Posterior cingulate gyrus (tissue), 11 donors: ENCODE measurements at regions of chr11 and their contacts with region 1.

Region 1: DNA sequence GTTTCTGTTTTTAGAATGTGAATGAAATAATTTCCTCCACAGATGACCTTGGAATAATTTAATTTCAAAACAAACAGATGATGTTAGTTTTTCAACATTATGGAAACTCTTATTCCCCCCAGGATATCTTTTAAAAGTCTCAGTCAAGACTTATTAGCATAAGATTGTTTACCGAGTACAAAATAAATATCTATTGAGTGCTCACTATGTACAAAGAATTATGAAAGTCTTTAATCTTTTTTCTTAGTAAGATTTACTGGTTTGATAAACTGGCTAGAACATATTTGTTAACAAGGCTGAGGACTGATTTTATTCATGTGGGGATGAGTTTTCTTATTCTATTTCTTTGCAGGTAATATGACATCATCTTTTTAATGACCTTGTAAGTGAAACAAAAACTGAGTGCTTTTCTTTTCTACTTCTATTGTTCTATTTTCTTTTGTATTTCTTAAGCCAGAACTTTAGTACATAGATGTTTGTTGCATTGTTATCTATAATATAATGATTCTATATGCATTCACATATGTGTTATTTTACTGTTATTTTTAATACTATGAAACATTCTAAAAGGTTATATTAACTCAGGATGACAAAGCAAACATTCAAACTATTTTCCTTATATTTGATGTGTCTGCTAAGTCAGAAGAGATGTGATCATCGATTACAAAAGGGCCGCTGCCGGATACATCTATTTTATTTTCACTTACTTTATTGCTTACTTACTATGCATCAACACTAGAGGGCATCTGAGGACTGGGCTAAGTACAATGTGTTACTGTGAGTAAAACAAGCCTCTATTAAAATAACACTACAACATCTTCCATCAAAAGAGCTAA is 111.0 kb upstream of the ARHGAP42 start:
- DNase-seq: no peak

Region 2: DNA sequence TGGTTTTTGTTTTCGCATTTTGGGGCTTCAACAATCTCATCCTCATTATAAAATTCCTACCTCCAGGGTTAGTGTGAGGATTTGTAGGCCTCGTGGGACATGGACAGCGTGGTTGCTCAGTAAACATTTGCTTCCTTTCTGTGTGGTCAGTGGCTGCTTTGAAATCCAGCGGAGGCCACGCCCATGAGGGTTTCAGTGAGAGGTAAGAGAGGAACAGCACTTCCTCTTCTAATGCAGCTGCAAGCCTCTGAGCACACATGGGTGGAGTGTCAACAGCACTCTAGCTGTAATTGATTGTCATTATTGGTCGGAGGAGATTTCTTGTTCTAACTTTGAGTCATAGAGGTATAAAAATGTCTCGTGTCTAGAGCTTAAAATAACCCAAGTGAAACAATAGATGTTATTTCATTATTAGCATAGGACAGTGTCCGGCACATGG is 105.0 kb after region 1 on chr11:
- intact Hi-C with region 1: loop called (anchors 2 kb)
- DNase-seq: peak in 3 of 10 donors; percentile 12 to 83 (median 73)

Region 3: GRCh38 chr11:100855466-100856067 is 279.5 kb after region 1 on chr11:
- intact Hi-C with region 1: loop called (anchors 1 kb)
- DNase-seq: no peak

Region 4: DNA sequence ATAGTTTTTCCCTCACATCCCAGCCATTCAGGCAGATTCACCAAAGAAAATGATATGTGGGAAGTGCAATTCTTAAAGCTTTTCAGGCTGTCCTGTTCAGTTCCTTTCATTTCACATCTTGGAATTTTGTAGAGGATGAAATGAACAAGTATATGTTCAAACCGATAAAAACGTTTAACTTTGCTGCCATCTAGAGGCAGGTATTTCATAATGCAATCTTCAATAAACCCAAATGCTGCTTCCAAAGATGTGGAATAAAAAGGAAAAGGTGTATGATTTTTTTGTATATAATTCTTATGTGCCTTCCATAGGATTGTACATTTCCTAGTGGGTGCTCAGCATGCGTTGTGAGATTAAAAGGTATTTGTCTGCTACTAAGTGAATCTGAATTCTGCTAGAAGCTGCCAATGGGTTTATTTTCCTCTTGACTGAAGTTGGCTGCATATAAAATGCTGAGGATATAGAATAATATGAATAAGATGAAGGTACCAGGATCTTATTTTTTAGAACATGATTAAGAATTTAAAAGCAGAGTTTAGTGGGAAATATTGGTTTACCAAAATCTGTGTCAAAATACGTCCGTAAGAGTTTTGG is 354.2 kb after region 1 on chr11:
- intact Hi-C with region 1: loop called (anchors 1 kb)
- DNase-seq: no peak

Region 5: GRCh38 chr11:101202614-101203013 is 626.5 kb after region 1 on chr11:
- intact Hi-C with region 1: no loop called
- DNase-seq: no peak